Endothelial cell of umbilical vein (primary cell): ENCODE measurements at regions of chr17 and their contacts with region 1.

Region 1: DNA sequence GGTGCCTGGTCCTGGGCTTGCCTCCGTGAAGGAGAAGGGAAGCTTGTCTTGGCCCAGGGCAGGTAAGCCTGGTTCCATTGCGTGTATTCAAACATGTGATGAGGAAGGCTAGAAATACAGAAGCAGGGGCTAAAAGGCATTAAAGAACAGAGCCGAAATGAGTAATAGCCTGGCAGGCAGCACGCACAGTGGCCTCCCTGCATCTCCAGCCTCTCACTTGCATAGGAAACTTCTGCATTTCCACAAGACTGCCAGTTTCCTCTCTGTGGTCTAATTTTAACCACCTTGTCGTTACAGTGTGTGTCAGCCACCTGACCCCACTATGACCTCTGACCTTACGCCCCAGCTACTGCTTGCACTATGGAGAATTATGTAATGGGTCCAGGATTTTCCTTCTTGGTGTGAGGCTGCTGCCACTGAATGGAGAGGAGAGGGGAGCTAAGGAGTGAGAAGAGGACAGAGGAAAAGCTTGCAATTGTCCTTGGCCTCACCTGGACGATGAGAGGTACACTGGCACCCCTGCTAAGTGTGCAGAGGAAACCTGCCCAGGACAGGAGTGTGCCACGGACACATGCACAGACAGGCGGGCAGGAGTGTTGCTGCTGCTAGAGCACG is 32.8 kb downstream of the HIC1 start:
- DNase-seq: peak; percentile 86
- H3K4me3 ChIP-seq: no peak overlapping the region
- H3K27ac ChIP-seq: peak overlapping the region; percentile 54
- H3K4me1 ChIP-seq: peaks cover 75% of the 10 kb centered on the region
- H3K27me3 ChIP-seq: no peaks in the 10 kb centered on the region
- CTCF ChIP-seq: no peak
- POLR2A ChIP-seq: no peak

Region 2: DNA sequence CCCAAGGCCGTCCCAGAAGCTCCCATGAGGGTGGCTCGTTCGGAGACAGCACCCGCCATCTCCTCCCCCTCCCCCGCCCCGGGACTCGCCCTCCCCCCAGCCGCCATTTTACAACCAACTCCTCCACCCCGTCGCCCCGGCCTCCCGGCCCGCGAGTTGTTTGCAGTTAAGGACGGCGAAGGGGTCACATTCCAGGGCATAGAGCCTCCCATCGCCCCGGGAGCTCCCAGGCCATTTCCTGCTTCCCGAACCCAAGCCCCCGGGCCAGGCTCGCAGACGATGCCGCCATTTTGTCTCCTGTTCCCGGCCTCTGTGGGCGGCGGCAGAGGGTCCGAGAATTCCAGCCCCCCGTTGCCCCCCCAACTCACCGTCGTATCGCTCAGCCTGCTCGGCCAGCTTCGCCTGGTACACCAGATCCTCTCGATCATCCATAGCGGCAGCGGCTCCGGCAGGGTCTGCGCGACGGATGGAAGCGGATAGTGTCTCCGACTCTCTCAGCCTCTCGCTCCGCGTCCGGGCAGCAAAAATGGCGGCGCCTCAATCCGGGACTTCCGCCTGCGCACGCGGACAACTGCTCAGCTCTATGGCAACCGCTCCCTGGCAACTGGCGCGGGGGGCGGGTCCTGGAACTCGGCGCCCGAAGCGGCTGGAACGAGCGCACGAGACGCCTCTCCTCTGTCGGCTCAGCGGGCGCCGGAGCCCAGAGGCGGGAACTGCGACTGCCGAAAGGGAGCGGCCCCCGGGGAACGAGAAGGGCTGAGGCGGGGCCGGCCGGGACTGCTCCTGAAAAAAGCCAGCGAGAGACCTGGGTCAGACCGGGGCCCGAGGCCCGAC is 687.8 kb before region 1 on chr17 and contains the start of gene YWHAE:
- CTCF ChIA-PET with region 1: no interaction called
- POLR2A ChIA-PET with region 1: no interaction called
- dilution Hi-C with region 1: no loop called
- intact Hi-C with region 1: no loop called
- DNase-seq: peak; percentile 96
- H3K4me3 ChIP-seq: peak within 1 kb of the TSS; percentile 53 to 99 (median 77)
- H3K27ac ChIP-seq: peak within 1 kb of the TSS; percentile 86
- H3K4me1 ChIP-seq: peaks cover 17% of the 10 kb centered on the region
- H3K27me3 ChIP-seq: peaks cover 0 to under 1% of the 10 kb centered on the region in 2 experiments
- CTCF ChIP-seq: no peak
- POLR2A ChIP-seq: peak; percentile 91
- total RNA-seq, gene YWHAE: 819 and 848 TPM in 2 replicates

Region 3: GRCh38 chr17:2029911-2030778 is 57.6 kb before region 1 on chr17 and contains the start of gene DPH1:
- CTCF ChIA-PET with region 1: no interaction called
- POLR2A ChIA-PET with region 1: no interaction called
- dilution Hi-C with region 1: no loop called
- intact Hi-C with region 1: no loop called
- DNase-seq: peak; percentile 88
- H3K4me3 ChIP-seq: peak within 1 kb of the TSS; percentile 81 to 97 (median 87)
- H3K27ac ChIP-seq: peak within 1 kb of the TSS; percentile 16
- H3K4me1 ChIP-seq: peaks cover 7% of the 10 kb centered on the region
- H3K27me3 ChIP-seq: peaks cover 15 to 16% of the 10 kb centered on the region in 2 experiments
- CTCF ChIP-seq: no peak
- POLR2A ChIP-seq: peak; percentile 69
- total RNA-seq, gene DPH1: 37.8 and 38.5 TPM in 2 replicates

Region 4: DNA sequence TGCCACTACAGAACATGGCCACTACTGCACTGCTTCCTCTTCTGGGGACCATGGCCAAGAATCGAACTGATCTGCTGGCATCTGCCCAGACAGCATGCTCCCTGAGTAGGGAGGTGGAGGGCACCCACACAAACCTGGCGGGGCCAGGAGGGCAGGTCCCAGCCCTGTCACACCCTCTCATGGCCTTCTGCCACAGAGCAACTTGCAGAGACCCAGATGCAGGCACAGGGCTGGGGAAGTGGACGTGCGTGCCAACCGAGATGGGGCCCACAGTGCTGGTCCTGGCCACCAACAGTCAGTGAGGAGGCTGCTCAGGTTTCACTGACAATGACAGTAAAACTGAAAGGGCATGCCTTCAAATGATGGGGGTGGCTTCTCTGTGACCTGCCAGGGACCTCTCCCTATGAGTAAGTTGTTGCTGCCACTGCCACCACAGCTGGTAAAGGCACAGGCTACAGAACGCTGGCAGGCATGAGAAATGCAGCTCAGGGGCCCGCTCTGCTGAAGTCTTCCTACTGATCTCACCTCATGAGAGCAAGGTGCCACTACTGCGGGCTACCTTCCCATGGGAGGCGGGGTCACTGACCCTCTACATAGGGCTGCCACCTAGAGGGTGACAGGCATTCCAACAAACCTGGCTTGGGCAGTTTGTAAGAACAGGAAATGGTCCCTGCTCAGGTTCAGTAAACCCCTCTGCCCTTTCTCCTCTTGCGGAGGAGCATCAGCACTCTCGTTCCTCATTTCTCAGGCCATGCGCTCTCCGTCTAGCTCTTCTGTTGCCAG is 17.3 kb before region 1 on chr17:
- CTCF ChIA-PET with region 1: interaction called, 21 read pairs
- POLR2A ChIA-PET with region 1: no interaction called
- dilution Hi-C with region 1: no loop called
- intact Hi-C with region 1: loop called (anchors 1 kb)
- DNase-seq: no peak
- H3K4me3 ChIP-seq: no peak overlapping the region
- H3K27ac ChIP-seq: peak overlapping the region; percentile 93
- H3K4me1 ChIP-seq: peaks cover 62% of the 10 kb centered on the region
- H3K27me3 ChIP-seq: no peaks in the 10 kb centered on the region
- CTCF ChIP-seq: no peak
- POLR2A ChIP-seq: no peak

Region 5: DNA sequence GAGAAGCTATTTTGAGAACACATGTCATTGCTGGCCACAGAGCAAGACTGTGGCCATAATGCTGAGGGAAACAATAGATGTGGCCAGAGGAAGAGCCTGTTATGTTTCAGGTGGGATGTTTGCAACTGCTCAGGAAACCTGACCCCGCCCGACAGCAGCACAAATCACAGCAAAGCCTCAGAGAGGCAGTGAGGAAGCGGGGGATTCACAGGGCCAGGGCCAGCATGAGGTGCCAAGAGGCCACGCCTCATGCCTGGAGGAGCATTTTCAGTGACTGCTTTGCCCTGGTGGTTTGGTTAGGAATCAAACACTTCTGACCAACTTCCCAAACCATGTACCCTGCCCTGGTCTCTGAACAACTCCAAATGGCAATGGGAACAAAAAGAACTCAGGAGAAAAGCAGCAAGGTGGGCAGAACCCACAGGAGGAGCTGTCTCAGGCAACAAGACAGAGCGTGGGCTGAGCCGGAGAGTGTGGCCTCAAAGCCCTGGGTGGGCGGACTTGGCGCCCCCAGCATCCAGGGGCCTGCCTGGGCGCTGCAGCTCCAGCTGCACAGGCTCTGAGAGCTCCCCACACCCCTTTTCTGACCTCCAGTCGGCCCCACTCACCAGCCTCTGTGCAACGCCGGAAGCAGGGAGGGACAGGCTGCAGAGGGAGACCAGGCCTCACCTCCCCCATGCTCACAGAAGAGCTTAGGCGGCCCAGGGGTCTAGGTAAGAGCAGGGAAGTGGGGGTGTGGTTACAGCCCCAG is 12.2 kb before region 1 on chr17:
- CTCF ChIA-PET with region 1: interaction called, 16 read pairs
- POLR2A ChIA-PET with region 1: no interaction called
- dilution Hi-C with region 1: no loop called
- intact Hi-C with region 1: loop called (anchors 1 kb)
- DNase-seq: no peak
- H3K4me3 ChIP-seq: no peak overlapping the region
- H3K27ac ChIP-seq: no peak overlapping the region
- H3K4me1 ChIP-seq: peaks cover 27% of the 10 kb centered on the region
- H3K27me3 ChIP-seq: no peaks in the 10 kb centered on the region
- CTCF ChIP-seq: no peak
- POLR2A ChIP-seq: no peak

Region 6: GRCh38 chr17:2122641-2123302 is 35.1 kb after region 1 on chr17:
- CTCF ChIA-PET with region 1: interaction called, 7 read pairs
- POLR2A ChIA-PET with region 1: no interaction called
- dilution Hi-C with region 1: no loop called
- intact Hi-C with region 1: loop called (anchors 2 kb)
- DNase-seq: peak; percentile 73
- H3K4me3 ChIP-seq: no peak overlapping the region
- H3K27ac ChIP-seq: peak overlapping the region; percentile 0
- H3K4me1 ChIP-seq: peaks cover 24% of the 10 kb centered on the region
- H3K27me3 ChIP-seq: no peaks in the 10 kb centered on the region
- CTCF ChIP-seq: no peak
- POLR2A ChIP-seq: no peak